Gastrocnemius medialis (tissue), 4 donors: ENCODE measurements at regions of chr21 and their contacts with region 1.

Region 1: DNA sequence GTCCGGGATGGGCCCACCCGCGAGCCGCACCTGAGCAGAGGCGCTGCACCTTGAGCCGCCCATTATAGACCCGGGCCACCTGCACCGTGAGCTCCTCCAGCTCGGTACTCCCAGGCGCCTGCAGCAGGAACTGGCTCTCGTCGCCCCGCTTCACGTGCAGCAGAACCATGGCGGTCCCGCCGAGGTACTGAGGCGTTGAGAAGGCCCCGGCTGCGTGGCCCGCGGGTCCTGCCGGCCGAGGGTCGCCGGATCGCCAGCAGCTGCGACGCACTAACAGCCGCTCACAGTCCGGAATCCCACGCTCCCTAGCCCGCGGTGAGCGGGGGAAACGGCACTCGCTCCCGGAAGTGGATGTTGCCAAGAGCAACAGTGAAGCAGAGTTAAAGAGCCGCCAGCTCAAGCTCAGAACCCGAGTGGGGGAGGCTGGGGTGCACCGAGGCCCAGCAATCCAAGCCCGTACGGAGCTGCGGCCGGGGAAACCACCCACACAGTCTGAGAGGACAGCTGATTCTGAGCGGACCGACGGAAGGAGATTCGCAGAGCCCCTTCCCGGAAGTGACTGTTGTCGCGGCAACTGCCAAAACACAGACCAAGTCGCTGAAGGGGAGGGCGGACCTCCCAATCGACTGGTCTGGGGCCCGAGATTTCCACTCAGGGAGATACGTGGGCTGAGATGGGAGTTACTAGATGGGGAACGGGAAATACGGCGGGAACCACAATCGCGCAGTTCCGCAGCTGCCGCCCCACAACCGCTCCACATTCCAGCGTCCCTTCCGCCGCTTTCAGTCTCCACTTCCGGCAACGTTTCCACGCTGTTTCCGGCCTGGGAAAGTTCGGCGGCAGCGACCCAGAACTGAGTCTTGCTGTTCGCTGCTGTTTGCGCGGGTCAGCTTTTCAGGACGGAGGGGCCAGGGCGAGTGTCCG is at the start of gene CFAP298:
- DNase-seq: peak; percentile 75 to 86
- ATAC-seq: peak; percentile 95 to 97
- H3K4me3 ChIP-seq: peak within 1 kb of the TSS; percentile 70 to 100 (median 90)
- H3K27ac ChIP-seq: peak within 1 kb of the TSS; percentile 81 to 93 (median 88)
- H3K4me1 ChIP-seq: peaks cover 6 to 15% of the 10 kb centered on the region in 2 donors
- H3K27me3 ChIP-seq: no peaks in the 10 kb centered on the region
- CTCF ChIP-seq: no peak
- POLR2A ChIP-seq: no peak
- total RNA-seq, gene CFAP298: 21.4 to 45.6 (median 38.2) TPM

Region 2: GRCh38 chr21:32727687-32728455 is 115.5 kb after region 1 on chr21 and contains the start of gene SYNJ1:
- in situ Hi-C with region 1: no loop called
- intact Hi-C with region 1: loop called (anchors 2 kb)
- DNase-seq: peak; percentile 91 to 92
- ATAC-seq: peak; percentile 96 to 97
- H3K4me3 ChIP-seq: peak within 1 kb of the TSS; percentile 77 to 94 (median 92)
- H3K27ac ChIP-seq: peak within 1 kb of the TSS; percentile 83 to 94 (median 94)
- H3K4me1 ChIP-seq: peaks cover 14 to 19% of the 10 kb centered on the region in 2 donors
- H3K27me3 ChIP-seq: no peaks in the 10 kb centered on the region
- CTCF ChIP-seq: no peak
- POLR2A ChIP-seq: peak; percentile 83
- total RNA-seq, gene SYNJ1: 10.0 to 34.8 (median 10.8) TPM

Region 3: DNA sequence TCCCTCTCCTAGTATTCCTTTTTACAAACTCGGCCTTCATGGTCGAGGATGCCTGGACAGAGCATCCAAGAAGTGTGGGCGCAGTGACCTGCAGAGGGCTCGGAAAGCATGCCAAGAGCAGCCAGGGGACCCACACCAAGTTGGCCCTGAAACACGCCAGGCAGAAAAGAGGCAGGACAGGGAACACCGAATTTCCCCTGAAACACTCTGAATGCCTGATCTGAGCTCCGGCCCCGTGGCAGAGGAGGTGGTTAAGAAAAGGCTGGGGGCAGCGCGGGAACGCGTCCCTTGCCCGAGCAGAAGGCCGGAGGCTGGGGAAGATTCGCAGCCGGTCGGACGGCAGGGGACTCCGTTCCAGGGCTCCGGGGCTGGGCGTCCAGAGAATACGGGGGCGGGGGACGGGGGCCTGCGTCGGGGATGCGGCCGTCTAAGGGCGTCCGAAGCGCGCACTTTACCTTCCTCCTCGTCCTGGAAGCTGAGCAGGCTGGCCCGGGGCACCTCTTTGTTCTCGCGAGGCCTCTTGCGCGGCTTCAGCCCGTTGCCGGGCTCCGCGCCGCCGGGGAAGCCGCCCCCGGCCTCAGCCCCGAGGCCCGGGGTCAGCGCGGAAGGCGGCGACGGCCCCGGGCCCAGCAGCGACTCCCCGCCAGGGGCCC is 158.7 kb after region 1 on chr21:
- in situ Hi-C with region 1: no loop called
- intact Hi-C with region 1: loop called (anchors 2 kb)
- DNase-seq: peak; percentile 27 to 42
- ATAC-seq: peak; percentile 53 to 60
- H3K4me3 ChIP-seq: peak overlapping the region; percentile 83 to 94 (median 86)
- H3K27ac ChIP-seq: peak overlapping the region; percentile 87 to 95 (median 88)
- H3K4me1 ChIP-seq: peaks cover 34 to 40% of the 10 kb centered on the region in 2 donors
- H3K27me3 ChIP-seq: peaks cover 0 to 4% (median 0%) of the 10 kb centered on the region in 3 donors
- CTCF ChIP-seq: no peak
- POLR2A ChIP-seq: no peak